Vagina (tissue), 2 donors: ENCODE measurements at regions of chr4 and their contacts with region 1.

Region 1: GRCh38 chr4:73311428-73311827 is 52.8 kb upstream of the ANKRD17 start:
- DNase-seq: no peak
- H3K4me3 ChIP-seq: no peak overlapping the region
- H3K27ac ChIP-seq: no peak overlapping the region
- H3K4me1 ChIP-seq: no peaks in the 10 kb centered on the region
- H3K27me3 ChIP-seq: no peaks in the 10 kb centered on the region
- CTCF ChIP-seq: peak in 2 of 3 experiments; percentile 13 to 33
- POLR2A ChIP-seq: no peak

Region 2: GRCh38 chr4:73281396-73281795 is 30.0 kb before region 1 on chr4:
- intact Hi-C with region 1: no loop called
- DNase-seq: no peak
- H3K4me3 ChIP-seq: no peak overlapping the region
- H3K27ac ChIP-seq: no peak overlapping the region
- H3K4me1 ChIP-seq: no peaks in the 10 kb centered on the region
- H3K27me3 ChIP-seq: no peaks in the 10 kb centered on the region
- CTCF ChIP-seq: no peak
- POLR2A ChIP-seq: no peak

Region 3: GRCh38 chr4:73631565-73632226 is 320.3 kb after region 1 on chr4:
- intact Hi-C with region 1: loop called (anchors 5 kb)
- DNase-seq: no peak
- H3K4me3 ChIP-seq: no peak overlapping the region
- H3K27ac ChIP-seq: no peak overlapping the region
- H3K4me1 ChIP-seq: no peaks in the 10 kb centered on the region
- H3K27me3 ChIP-seq: no peaks in the 10 kb centered on the region
- CTCF ChIP-seq: no peak
- POLR2A ChIP-seq: no peak